Activated B cell treated with CpG ODN at 0.5 μM for 24 hours (primary cell): ENCODE measurements at regions of chr21 and their contacts with region 1.

Region 1: DNA sequence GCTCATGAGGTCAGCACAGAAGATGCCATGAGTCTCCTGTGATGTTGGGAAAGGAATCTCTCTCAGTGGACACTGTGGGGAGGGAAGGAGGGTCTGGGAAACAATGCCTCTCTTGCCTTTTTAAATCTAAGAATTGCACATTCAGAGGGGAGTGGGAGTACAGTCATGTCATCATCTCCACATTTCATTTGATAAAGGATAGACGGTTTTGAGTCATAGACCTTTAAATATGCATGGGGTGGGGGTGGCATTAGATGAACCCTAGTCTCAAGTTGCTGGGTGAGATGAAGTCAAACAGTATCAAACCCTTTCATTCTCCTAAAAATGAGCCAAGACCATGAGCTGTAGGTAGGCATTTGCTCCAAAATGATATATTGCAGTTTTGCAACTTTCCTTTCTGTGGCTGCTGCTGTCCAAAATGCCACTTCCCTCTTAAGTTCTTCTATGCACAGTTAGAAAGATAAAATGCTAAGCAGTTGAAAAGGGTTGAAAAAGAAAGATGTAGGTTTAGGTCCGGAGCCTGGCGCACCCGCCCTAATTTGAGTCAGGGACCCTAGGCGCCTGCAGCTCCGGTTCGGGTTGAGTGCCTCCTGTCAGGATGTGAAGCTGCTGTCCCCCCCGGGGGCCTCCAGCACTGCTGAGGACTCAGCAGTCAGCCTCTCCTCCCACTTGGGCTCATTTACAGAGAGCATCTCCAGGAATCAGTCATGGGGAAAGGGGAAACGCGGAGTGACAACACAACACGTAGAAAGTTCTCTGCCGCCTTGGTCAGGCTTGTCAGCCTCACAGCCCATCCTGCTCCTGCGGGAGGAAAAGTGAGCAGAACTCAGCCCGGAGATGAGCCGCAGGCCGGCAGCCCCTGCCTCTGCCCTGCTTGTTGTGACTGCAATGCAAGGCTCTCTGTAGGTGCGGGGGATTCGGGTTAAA is 479.3 kb upstream of the RUNX1 start:
- DNase-seq: peak; percentile 40
- ATAC-seq: peak; percentile 70
- H3K4me3 Mint-ChIP-seq: peak overlapping the region; percentile 85
- H3K27ac Mint-ChIP-seq: peak overlapping the region; percentile 87
- H3K4me1 Mint-ChIP-seq: peaks cover 51% of the 10 kb centered on the region
- H3K27me3 Mint-ChIP-seq: no peaks in the 10 kb centered on the region
- CTCF ChIP-seq: no peak

Region 2: DNA sequence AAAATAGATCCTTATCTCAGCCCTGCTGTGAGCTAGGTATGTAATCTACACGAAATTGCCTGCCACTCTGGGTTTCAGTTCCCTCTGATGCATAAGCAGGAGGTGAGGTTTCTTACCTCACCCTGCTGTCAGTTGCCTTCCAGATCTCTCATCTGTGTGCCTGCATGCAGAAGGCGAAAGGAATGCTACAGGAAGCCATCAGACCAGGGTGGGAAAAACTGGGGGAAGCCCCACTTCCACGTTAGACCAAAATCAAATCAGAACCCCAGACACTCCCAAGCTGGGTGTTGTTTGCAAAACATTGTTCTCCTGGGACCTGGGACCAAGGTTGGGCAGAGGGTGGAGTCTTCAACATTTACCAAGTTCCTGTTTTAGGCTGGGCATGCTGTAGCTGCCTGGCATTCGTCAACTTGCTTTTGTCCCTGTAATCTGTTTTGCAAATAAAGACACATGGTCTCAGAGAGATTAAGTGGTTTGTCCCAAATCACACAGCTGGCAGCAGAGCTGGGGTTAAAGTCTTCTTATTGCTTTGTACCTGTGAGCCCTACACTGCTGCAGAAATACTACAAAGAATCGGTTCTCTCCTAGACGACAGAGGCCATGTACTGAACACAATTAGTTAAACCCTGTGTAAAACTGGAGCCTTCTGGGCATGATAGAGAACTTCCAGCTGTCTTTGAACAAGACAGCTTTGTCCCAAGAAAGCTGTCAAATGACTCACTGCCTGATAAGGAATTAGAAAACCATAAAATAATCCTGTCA is 89.6 kb before region 1 on chr21:
- CTCF ChIA-PET with region 1: no interaction called
- POLR2A ChIA-PET with region 1: interaction called, 3 read pairs
- intact Hi-C with region 1: loop called (anchors 2 kb)
- DNase-seq: peak; percentile 46
- ATAC-seq: peak; percentile 95
- H3K4me3 Mint-ChIP-seq: peak overlapping the region; percentile 71
- H3K27ac Mint-ChIP-seq: peak overlapping the region; percentile 80
- H3K4me1 Mint-ChIP-seq: peaks cover 32% of the 10 kb centered on the region
- H3K27me3 Mint-ChIP-seq: no peaks in the 10 kb centered on the region
- CTCF ChIP-seq: no peak

Region 3: GRCh38 chr21:35506352-35506751 is 22.0 kb before region 1 on chr21:
- CTCF ChIA-PET with region 1: no interaction called
- POLR2A ChIA-PET with region 1: no interaction called
- intact Hi-C with region 1: loop called (anchors 2 kb)
- DNase-seq: no peak
- ATAC-seq: no peak
- H3K4me3 Mint-ChIP-seq: no peak overlapping the region
- H3K27ac Mint-ChIP-seq: no peak overlapping the region
- H3K4me1 Mint-ChIP-seq: peaks cover 14% of the 10 kb centered on the region
- H3K27me3 Mint-ChIP-seq: peaks cover 23% of the 10 kb centered on the region
- CTCF ChIP-seq: no peak

Region 4: GRCh38 chr21:35517865-35518264 is 10.5 kb before region 1 on chr21:
- CTCF ChIA-PET with region 1: no interaction called
- POLR2A ChIA-PET with region 1: no interaction called
- intact Hi-C with region 1: no loop called
- DNase-seq: no peak
- ATAC-seq: no peak
- H3K4me3 Mint-ChIP-seq: no peak overlapping the region
- H3K27ac Mint-ChIP-seq: no peak overlapping the region
- H3K4me1 Mint-ChIP-seq: no peaks in the 10 kb centered on the region
- H3K27me3 Mint-ChIP-seq: peaks cover 11% of the 10 kb centered on the region
- CTCF ChIP-seq: no peak

Region 5: GRCh38 chr21:35540950-35541638 is 12.7 kb after region 1 on chr21:
- CTCF ChIA-PET with region 1: no interaction called
- POLR2A ChIA-PET with region 1: no interaction called
- intact Hi-C with region 1: no loop called
- DNase-seq: no peak
- ATAC-seq: no peak
- H3K4me3 Mint-ChIP-seq: no peak overlapping the region
- H3K27ac Mint-ChIP-seq: no peak overlapping the region
- H3K4me1 Mint-ChIP-seq: no peaks in the 10 kb centered on the region
- H3K27me3 Mint-ChIP-seq: peaks cover 12% of the 10 kb centered on the region
- CTCF ChIP-seq: no peak